ENCODE measurements at regions of chr3 and their contacts with region 1.

Region 1: DNA sequence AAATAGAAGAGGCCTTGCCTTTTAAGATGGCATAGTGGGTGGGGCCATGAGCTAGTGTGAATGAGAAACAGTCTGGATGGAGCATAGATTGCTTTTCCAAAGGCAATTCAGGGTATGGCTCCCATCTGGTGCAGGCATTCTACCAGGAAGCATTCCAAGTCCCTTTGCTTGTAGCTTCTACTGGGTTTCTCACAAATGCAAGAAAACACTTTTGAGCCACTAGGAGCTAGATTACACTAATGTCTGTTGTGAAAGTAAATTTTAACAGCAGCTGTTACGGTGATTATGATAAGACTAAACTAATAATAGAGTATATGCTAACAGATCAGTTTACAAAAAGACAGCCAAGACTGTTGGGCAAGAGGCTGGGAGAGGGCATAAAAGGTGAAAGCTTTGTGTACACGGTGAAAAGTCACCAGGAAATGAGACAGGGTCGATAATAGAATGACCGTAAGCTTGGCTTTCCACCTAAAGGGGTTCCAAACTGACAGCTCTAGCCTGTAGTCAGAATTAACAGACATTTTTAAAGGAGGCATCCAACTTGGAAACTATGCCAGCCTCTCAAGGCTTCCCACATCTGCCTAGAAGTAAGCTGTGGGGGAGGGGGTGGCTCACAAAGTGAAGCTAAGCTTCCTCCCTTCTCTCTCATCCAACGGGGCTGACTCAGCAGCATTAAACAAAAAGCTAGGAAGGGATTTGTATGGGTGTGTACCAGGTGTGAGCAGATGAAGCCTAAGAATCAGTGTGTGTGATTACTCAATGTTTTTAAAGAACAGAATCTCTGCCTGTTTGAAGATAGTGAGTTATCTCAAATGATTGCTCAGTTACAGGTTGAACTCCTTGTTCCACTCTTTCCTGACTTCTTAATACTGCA is 61.1 kb upstream of the GPD1L start:
- DNase-seq: peak; percentile 59
- ATAC-seq: peak; percentile 70
- H3K4me3 ChIP-seq: peak overlapping the region in 1 of 2 experiments; percentile 40; a peak in 2 of 4 replicates
- H3K27ac ChIP-seq: peak overlapping the region; percentile 70
- H3K4me1 ChIP-seq: peaks cover 10% of the 10 kb centered on the region
- H3K27me3 ChIP-seq: no peaks in the 10 kb centered on the region
- CTCF ChIP-seq: no peak

Region 2: DNA sequence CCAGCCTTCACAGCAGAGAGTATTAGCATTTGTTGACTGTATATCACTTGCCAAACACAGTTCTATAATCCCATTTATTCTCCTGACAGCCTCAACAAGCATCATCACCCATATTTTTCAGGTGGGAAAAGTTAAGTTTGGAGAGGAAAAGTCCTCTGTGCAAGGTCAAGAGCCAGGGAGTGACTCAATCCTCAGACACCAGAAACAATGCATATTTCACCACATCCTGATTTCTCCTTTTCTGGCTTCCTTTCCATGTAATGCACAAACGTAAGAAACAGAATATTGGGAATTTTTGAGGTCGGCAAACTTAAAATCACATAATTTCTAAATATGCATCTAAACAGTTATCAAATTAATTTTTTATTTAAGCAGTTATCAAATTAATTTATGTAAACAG is 1034.8 kb before region 1 on chr3:
- CTCF ChIA-PET with region 1: no interaction called
- POLR2A ChIA-PET with region 1: no interaction called
- in situ Hi-C with region 1: no loop called
- intact Hi-C with region 1: no loop called
- DNase-seq: no peak
- ATAC-seq: no peak
- H3K4me3 ChIP-seq: no peak overlapping the region
- H3K27ac ChIP-seq: no peak overlapping the region
- H3K4me1 ChIP-seq: no peaks in the 10 kb centered on the region
- H3K27me3 ChIP-seq: no peaks in the 10 kb centered on the region
- CTCF ChIP-seq: no peak

Region 3: GRCh38 chr3:32056559-32057290 is 11.4 kb after region 1 on chr3:
- CTCF ChIA-PET with region 1: interaction called, 14 read pairs
- POLR2A ChIA-PET with region 1: no interaction called
- in situ Hi-C with region 1: no loop called
- intact Hi-C with region 1: no loop called
- DNase-seq: no peak
- ATAC-seq: no peak
- H3K4me3 ChIP-seq: no peak overlapping the region
- H3K27ac ChIP-seq: no peak overlapping the region
- H3K4me1 ChIP-seq: no peaks in the 10 kb centered on the region
- H3K27me3 ChIP-seq: no peaks in the 10 kb centered on the region
- CTCF ChIP-seq: no peak